ENCODE measurements at regions of chr1 and their contacts with region 1.

Region 1: GRCh38 chr1:248288391-248288790 is 10.6 kb upstream of the OR2T33 start:
- DNase-seq: no peak
- H3K4me3 ChIP-seq: no peak overlapping the region
- H3K27ac ChIP-seq: no peak overlapping the region
- H3K27me3 ChIP-seq: no peaks in the 10 kb centered on the region
- CTCF ChIP-seq: no peak

Region 2: DNA sequence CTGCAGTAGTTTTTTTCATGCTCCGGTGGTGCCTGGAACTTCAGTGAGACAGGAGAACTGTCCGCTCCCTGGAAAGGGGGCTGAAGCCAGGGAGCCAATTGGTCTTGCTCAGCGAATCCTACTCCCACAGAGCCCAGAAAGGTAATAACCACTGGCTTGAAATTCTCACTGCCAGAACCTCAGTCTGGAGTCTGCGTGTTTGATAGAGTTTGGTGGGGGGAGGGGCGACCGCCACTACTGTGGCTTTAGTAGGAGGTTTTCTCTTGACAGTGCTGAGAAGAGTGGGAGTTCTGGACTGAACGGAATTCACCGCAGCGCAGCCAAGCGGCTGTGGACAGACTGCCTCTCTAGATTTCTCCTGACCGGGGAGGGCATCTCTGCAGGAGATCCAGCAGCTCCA is 99.4 kb before region 1 on chr1:
- intact Hi-C with region 1: no loop called
- DNase-seq: no peak
- H3K4me3 ChIP-seq: no peak overlapping the region
- H3K27ac ChIP-seq: no peak overlapping the region
- H3K27me3 ChIP-seq: peaks cover 0 to 10% (median 0%) of the 10 kb centered on the region in 45 donors
- CTCF ChIP-seq: no peak

Region 3: DNA sequence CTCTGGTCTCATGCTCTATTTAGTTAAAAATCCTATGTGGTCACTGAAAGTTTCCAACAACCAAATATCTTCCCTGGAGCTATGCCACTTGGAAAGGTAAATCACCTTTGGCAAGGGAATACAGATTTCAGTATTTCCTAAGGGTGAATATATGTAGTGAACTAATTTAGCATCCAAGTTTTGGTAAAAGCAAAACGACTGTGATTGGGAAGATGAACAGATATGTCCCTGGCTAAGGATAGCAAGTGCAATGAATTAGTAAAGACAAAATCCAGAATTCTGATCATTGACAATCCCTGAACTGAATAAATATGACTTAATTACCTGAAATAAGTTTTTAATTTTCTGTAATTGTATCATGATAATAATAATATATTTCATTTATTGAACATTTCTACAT is 10.5 kb before region 1 on chr1 and contains the start of gene OR2T33:
- intact Hi-C with region 1: loop called in 1 of 2 experiments (anchors 1 kb)
- DNase-seq: no peak
- H3K4me3 ChIP-seq: no peak within 1 kb of the TSS
- H3K27ac ChIP-seq: no peak within 1 kb of the TSS
- H3K27me3 ChIP-seq: no peaks in the 10 kb centered on the region
- CTCF ChIP-seq: no peak
- total RNA-seq, gene OR2T33: 0.23 to 1.9 (median 0.72) TPM in 35 of 120 experiments, not detected in the others